Activated CD8-positive, alpha-beta memory T cell treated with anti-CD3 and anti-CD28 coated beads, Interleukin-2, amount 10 ng/mL, durations not matched to agents 7 days and 5 days (primary cell): ENCODE measurements at regions of chr19 and their contacts with region 1.

Region 1: GRCh38 chr19:17859533-17860330 is at the start of gene RPL18A:
- DNase-seq: peak; percentile 100
- ATAC-seq: peak; percentile 97
- H3K4me3 Mint-ChIP-seq: peak within 1 kb of the TSS; percentile 94
- H3K27ac Mint-ChIP-seq: peak within 1 kb of the TSS; percentile 93
- H3K4me1 Mint-ChIP-seq: peaks cover 37% of the 10 kb centered on the region
- H3K27me3 Mint-ChIP-seq: no peaks in the 10 kb centered on the region
- total RNA-seq, gene RPL18A: 1,945 to 2,182 TPM

Region 2: DNA sequence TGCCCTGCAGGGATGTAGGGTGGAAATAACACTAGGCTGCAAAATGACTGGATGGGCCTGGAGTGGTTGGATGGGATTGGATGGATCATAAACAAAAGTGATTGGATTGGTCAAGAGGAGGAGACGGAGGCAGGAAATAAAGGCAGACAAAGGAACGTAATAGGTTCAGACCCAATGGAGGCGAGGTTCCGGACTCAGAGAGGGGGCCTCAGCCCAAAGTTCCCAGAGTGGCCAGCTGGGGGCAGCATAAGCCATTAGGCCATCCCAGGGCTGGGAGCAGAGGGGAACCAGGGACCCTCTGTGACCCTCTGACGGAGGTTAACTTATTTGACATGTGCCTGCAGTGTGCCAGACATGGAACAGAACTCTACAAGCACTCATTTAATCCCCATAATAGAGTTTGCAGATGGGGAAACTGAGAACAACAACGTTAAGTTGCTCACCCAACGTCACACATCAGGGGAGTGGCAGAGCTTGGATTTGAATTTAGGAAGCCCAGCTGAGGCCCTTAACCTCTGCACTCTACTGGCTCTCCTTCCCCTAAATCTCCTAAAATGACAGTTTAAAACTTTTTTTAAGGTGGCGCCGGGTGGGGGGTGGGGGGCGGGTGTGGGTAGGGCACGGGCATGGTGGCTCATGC is 155.8 kb before region 1 on chr19:
- CTCF ChIA-PET with region 1: interaction called, 41 read pairs
- DNase-seq: peak; percentile 76
- ATAC-seq: peak; percentile 84
- H3K4me3 Mint-ChIP-seq: no peak overlapping the region
- H3K27ac Mint-ChIP-seq: no peak overlapping the region
- H3K4me1 Mint-ChIP-seq: no peaks in the 10 kb centered on the region
- H3K27me3 Mint-ChIP-seq: peaks cover 6% of the 10 kb centered on the region

Region 3: DNA sequence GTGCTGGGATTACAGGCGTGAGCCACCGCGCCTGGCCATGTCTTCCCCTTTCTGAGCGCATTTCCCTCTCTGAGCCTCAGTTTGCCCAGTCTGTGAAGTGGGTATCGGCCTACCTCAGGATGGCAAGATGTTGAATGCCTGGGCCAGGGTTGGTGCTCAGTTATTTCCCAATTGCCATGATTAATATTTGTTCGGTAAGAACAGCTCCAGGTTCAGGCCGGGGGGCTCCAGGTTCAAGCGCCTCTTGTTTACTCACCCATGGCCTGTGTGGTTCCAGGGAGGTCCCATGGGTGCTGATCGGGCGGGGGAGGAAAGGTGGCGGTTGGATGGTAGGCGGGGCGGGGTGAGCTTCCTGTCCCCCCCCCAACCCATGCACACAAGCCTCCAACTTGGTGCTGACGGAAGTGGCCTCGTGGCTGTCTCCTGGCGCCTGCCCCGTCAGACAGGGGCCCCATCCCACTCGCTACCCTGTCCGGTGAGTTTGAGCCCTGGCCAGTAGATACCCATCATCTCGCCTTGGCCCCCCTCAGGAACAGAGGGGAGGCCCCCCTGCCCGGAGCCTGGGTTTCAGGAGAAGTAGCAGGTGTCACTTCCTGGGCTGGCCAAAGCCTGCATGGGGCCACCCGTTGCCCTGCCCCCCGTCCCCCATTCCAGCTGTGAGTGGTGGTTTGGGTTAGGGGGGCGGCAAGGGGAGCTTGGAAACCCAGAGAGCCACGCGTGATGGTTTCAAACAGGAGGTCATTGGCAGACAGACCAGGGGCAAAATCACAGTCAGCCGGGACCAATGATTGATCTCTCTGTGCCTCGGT is 108.4 kb before region 1 on chr19 and contains the start of gene FCHO1:
- CTCF ChIA-PET with region 1: interaction called, 15 read pairs
- DNase-seq: peak; percentile 95
- ATAC-seq: peak; percentile 69
- H3K4me3 Mint-ChIP-seq: peak within 1 kb of the TSS; percentile 81
- H3K27ac Mint-ChIP-seq: peak within 1 kb of the TSS; percentile 92
- H3K4me1 Mint-ChIP-seq: peaks cover 61% of the 10 kb centered on the region
- H3K27me3 Mint-ChIP-seq: no peaks in the 10 kb centered on the region
- total RNA-seq, gene FCHO1: 58.4 to 70.6 TPM

Region 4: GRCh38 chr19:17790059-17790780 is 69.5 kb before region 1 on chr19:
- CTCF ChIA-PET with region 1: interaction called, 10 read pairs
- DNase-seq: no peak
- ATAC-seq: no peak
- H3K4me3 Mint-ChIP-seq: no peak overlapping the region
- H3K27ac Mint-ChIP-seq: no peak overlapping the region
- H3K4me1 Mint-ChIP-seq: peaks cover 24% of the 10 kb centered on the region
- H3K27me3 Mint-ChIP-seq: peaks cover 16% of the 10 kb centered on the region

Region 5: GRCh38 chr19:17847538-17848366 is 12.0 kb before region 1 on chr19 and contains the start of gene JAK3:
- CTCF ChIA-PET with region 1: interaction called, 58 read pairs
- DNase-seq: peak; percentile 94
- ATAC-seq: peak; percentile 81
- H3K4me3 Mint-ChIP-seq: peak within 1 kb of the TSS; percentile 86
- H3K27ac Mint-ChIP-seq: peak within 1 kb of the TSS; percentile 95
- H3K4me1 Mint-ChIP-seq: peaks cover 70% of the 10 kb centered on the region
- H3K27me3 Mint-ChIP-seq: no peaks in the 10 kb centered on the region
- total RNA-seq, gene JAK3: 137 to 146 TPM

Region 6: GRCh38 chr19:17932485-17933338 is 73.0 kb after region 1 on chr19 and contains the start of gene CCDC124:
- CTCF ChIA-PET with region 1: interaction called, 361 read pairs
- DNase-seq: peak; percentile 96
- ATAC-seq: peak; percentile 98
- H3K4me3 Mint-ChIP-seq: peak within 1 kb of the TSS; percentile 77
- H3K27ac Mint-ChIP-seq: peak within 1 kb of the TSS; percentile 86
- H3K4me1 Mint-ChIP-seq: peaks cover 37% of the 10 kb centered on the region
- H3K27me3 Mint-ChIP-seq: no peaks in the 10 kb centered on the region
- total RNA-seq, gene CCDC124: 83.8 to 101 TPM